ENCODE measurements at regions of chr16 and their contacts with region 1.

Region 1: GRCh38 chr16:66650707-66651473 is 45.7 kb downstream of the CMTM4 start:
- DNase-seq: peak; percentile 91
- ATAC-seq: peak; percentile 100
- H3K4me3 Mint-ChIP-seq: peak overlapping the region; percentile 43
- H3K27ac Mint-ChIP-seq: peak overlapping the region; percentile 7
- H3K4me1 Mint-ChIP-seq: peaks cover 18% of the 10 kb centered on the region
- H3K27me3 Mint-ChIP-seq: no peaks in the 10 kb centered on the region

Region 2: DNA sequence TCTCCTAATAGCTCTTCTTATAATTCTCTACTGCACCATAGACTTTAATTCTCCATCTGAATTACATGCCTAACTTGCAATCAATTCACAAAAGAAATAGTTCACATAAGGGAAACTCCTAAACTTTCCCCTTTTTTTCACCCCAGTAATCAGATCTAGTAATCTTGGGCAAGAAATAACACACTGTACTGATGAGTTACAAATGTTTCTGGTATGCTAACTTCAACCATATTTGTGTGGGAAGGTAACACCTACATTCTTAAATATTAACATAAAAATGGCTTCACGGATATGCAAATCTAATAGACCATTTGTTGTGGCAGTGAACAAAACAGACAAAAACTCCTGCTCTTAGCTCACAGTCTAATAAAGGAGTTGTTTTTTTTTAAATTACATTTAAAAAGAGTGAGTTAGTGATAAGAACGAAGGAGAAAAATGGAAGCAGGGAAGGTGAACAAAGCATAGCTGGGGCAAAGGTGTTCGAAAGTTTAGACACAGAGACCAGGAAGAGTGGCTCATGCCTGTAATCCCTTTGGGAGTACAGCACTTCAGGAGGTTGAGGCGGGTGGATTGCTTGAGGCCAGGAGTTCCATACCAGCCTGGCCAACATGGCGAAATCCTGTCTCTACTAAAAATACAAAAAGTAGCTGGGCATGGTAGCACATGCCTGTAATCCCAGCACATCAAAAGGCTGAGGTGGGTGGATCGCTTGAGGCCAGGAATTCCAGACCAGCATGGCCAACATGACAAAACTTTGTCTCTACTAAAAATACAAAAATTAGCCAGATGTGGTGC is 11.6 kb before region 1 on chr16:
- CTCF ChIA-PET with region 1: interaction called, 28 read pairs
- DNase-seq: no peak
- ATAC-seq: no peak
- H3K4me3 Mint-ChIP-seq: no peak overlapping the region
- H3K27ac Mint-ChIP-seq: no peak overlapping the region
- H3K4me1 Mint-ChIP-seq: no peaks in the 10 kb centered on the region
- H3K27me3 Mint-ChIP-seq: peaks cover 13% of the 10 kb centered on the region

Region 3: DNA sequence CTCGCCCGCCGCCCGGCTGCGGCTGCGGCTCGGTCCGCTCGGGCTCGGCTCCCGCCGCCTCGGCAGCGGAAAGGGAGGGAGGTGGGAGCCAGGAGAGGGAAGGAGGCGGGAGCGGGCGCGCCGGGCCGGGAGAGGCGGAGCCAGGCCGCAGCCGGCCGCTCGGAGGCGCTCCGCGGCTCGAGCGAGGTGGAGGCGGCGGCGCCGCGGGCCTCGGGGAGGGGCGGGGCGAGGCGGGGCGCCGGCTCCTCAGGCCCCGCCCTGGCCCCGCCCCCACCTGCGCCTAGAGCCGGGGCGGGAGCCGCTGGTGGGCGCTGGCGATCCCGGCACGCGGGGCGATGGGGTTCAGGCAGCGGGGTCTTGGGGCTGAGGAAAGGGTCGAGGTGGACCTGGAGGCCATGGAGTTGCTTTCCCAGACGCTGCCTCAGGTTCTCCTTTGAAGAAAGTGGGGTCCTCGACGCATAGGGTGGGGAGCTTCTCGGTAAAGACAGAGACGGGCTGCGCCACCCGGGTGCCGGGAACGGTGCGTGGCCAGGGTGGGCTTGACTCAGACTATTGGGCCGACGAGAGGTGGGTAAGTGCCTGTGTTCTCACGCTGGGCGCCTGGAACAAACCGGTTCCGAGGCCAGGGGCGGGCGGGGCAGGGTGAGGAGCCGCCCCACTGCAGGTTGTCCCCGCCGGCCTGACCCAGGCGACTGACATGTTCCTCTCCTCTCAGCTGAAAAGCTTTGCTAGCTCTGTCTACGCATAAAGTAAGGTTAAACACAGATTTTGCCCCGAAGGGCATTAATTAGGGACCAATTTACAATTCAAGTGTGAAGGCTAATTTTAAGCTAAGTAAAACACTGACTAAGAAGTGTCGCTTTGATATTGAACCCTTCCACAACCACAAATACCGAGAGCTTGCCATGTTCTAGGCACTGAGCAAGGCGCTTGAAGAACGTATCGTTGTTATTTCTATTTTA is 46.1 kb after region 1 on chr16 and contains the start of gene CMTM4:
- CTCF ChIA-PET with region 1: interaction called, 11 read pairs
- DNase-seq: peak; percentile 70
- ATAC-seq: peak; percentile 94
- H3K4me3 Mint-ChIP-seq: peak within 1 kb of the TSS; percentile 73
- H3K27ac Mint-ChIP-seq: no peak within 1 kb of the TSS
- H3K4me1 Mint-ChIP-seq: peaks cover 15% of the 10 kb centered on the region
- H3K27me3 Mint-ChIP-seq: peaks cover 47% of the 10 kb centered on the region
- total RNA-seq, gene CMTM4: 1.1 to 1.2 TPM

Region 4: GRCh38 chr16:66728117-66728787 is 77.4 kb after region 1 on chr16:
- CTCF ChIA-PET with region 1: interaction called, 11 read pairs
- DNase-seq: no peak
- ATAC-seq: peak; percentile 85
- H3K4me3 Mint-ChIP-seq: no peak overlapping the region
- H3K27ac Mint-ChIP-seq: peak overlapping the region; percentile 42
- H3K4me1 Mint-ChIP-seq: peaks cover 17% of the 10 kb centered on the region
- H3K27me3 Mint-ChIP-seq: no peaks in the 10 kb centered on the region

Region 5: GRCh38 chr16:66740010-66740409 is 89.1 kb after region 1 on chr16:
- CTCF ChIA-PET with region 1: interaction called, 15 read pairs
- DNase-seq: peak; percentile 57
- ATAC-seq: peak; percentile 57
- H3K4me3 Mint-ChIP-seq: no peak overlapping the region
- H3K27ac Mint-ChIP-seq: no peak overlapping the region
- H3K4me1 Mint-ChIP-seq: peaks cover 27% of the 10 kb centered on the region
- H3K27me3 Mint-ChIP-seq: no peaks in the 10 kb centered on the region

Region 6: GRCh38 chr16:66751303-66751991 is 100.6 kb after region 1 on chr16 and contains the start of gene DYNC1LI2:
- CTCF ChIA-PET with region 1: interaction called, 10 read pairs
- DNase-seq: peak; percentile 86
- ATAC-seq: peak; percentile 87
- H3K4me3 Mint-ChIP-seq: peak within 1 kb of the TSS; percentile 85
- H3K27ac Mint-ChIP-seq: peak within 1 kb of the TSS; percentile 86
- H3K4me1 Mint-ChIP-seq: peaks cover 46% of the 10 kb centered on the region
- H3K27me3 Mint-ChIP-seq: peaks cover 24% of the 10 kb centered on the region
- total RNA-seq, gene DYNC1LI2: 71.6 to 81.0 TPM

Measured in activated CD8-positive, alpha-beta memory T cell treated with anti-CD3 and anti-CD28 coated beads, Interleukin-2, amount 10 ng/mL, durations not matched to agents 7 days and 5 days (primary cell).